ENCODE measurements at regions of chr14 and their contacts with region 1.

Region 1: DNA sequence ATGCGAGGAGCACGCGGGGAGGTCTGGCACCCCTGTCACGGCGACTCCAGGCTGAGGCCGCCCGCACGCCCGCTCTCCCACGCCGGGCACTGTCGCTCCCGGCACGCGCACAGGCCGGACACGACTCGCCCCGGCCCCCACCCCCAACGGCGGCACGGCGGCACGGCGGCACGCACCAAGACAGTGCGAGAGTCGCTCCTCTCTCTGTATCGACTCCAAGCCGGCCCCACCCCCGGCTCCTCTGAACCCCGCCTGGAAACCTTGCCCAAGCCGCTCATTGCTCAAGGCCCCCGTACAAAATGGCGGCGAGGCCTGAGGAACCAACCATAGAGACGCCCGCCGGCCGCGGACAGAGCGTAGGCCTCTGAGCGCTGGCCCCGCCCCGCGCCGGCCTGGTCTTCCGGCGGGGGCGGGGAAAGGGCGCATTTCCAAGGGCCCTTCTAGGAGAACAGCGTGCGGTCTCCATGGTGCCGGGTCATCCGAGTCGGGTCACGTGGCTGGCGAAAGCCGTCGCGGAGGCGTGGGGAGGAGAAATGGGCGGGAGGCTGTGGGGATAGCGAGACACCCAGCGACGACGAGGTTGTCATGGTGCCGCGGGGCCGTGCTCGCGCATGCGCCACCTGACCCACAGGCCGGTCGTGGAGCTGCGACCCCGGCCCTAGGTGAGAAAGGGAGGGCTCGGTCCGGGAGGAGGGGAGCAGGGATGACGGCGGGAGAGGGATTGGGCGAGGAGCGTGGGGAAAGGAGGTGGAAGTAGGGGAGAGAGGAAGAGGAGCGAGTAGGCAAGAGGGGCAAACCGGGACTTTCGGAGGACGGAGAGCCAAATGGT is at the start of gene CIPC:
- DNase-seq: peak; percentile 100
- ATAC-seq: peak; percentile 70 to 72
- H3K4me3 ChIP-seq: peak within 1 kb of the TSS; percentile 71 to 90 (median 85)
- H3K27ac ChIP-seq: peak within 1 kb of the TSS; percentile 93 to 99 (median 98)
- H3K4me1 ChIP-seq: peaks cover 54 to 58% of the 10 kb centered on the region in 2 donors
- H3K27me3 ChIP-seq: no peaks in the 10 kb centered on the region
- CTCF ChIP-seq: no peak
- POLR2A ChIP-seq: peak; percentile 89 to 94
- total RNA-seq, gene CIPC: 114 to 178 (median 120) TPM

Region 2: GRCh38 chr14:76812211-76813044 is 285.5 kb before region 1 on chr14 and contains the start of gene ANGEL1:
- in situ Hi-C with region 1: no loop called
- intact Hi-C with region 1: loop called (anchors 1 kb)
- DNase-seq: peak; percentile 92 to 97
- ATAC-seq: peak; percentile 91
- H3K4me3 ChIP-seq: peak within 1 kb of the TSS; percentile 71 to 91 (median 86)
- H3K27ac ChIP-seq: peak within 1 kb of the TSS; percentile 86 to 92 (median 90)
- H3K4me1 ChIP-seq: peaks cover 8 to 16% of the 10 kb centered on the region in 2 donors
- H3K27me3 ChIP-seq: no peaks in the 10 kb centered on the region
- CTCF ChIP-seq: peak in 2 of 5 experiments; percentile 16 to 38
- POLR2A ChIP-seq: peak; percentile 83 to 94
- total RNA-seq, gene ANGEL1: 8.6 to 16.9 (median 12.7) TPM

Region 3: DNA sequence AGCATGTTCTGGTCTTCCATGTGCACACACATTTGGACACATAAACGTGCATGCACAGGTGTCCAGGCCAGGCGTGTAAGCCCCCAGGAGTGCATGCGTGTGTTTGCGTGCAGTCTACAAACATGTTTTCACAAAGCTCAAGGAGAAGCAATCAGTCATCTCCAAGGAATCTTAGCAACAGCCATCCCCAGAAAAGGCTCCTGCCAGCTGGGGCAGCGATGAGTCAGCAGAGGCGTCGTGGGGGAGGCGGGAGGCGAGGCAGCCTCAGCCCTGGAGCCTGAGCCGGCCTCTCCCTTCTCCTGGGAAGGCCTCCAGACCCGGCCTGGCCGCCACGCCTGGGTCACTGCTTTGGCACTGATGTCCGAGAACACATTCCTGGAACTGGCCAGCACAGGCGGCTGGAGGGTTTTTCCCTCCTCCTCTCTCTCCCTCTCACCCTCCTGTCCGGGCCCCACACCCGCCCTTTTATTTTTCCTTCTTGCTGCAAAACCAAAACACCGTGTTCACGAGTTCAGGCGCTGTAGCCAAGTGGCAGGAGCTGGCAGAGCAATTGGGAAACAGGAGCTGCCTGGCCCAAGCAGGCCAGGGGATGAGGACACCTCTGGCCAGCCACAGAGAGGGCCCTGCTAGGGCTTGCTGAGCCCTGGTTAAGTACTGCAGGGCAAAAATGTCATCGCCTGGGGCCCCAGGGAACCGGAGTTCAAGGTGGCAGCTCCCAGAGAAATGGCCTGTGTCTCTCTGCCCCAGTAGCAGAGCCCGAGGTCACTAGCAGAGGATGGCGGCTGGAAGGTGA is 179.0 kb before region 1 on chr14:
- in situ Hi-C with region 1: no loop called
- intact Hi-C with region 1: loop called (anchors 1 kb)
- DNase-seq: peak; percentile 96 to 99
- ATAC-seq: peak; percentile 71 to 72
- H3K4me3 ChIP-seq: peak overlapping the region; percentile 7 to 49 (median 32)
- H3K27ac ChIP-seq: peak overlapping the region; percentile 90 to 98 (median 94)
- H3K4me1 ChIP-seq: peaks cover 49% of the 10 kb centered on the region in 2 donors
- H3K27me3 ChIP-seq: no peaks in the 10 kb centered on the region
- CTCF ChIP-seq: no peak
- POLR2A ChIP-seq: peak in 1 of 2 donors; percentile 40

Region 4: GRCh38 chr14:77040059-77040740 is 57.7 kb before region 1 on chr14:
- in situ Hi-C with region 1: no loop called
- intact Hi-C with region 1: loop called (anchors 5 kb)
- DNase-seq: peak; percentile 94 to 96
- ATAC-seq: peak; percentile 66
- H3K4me3 ChIP-seq: peak overlapping the region; percentile 52 to 65 (median 58)
- H3K27ac ChIP-seq: peak overlapping the region; percentile 84 to 100 (median 96)
- H3K4me1 ChIP-seq: peaks cover 75 to 90% of the 10 kb centered on the region in 2 donors
- H3K27me3 ChIP-seq: no peaks in the 10 kb centered on the region
- CTCF ChIP-seq: no peak
- POLR2A ChIP-seq: peak in 1 of 2 donors; percentile 44

Region 5: DNA sequence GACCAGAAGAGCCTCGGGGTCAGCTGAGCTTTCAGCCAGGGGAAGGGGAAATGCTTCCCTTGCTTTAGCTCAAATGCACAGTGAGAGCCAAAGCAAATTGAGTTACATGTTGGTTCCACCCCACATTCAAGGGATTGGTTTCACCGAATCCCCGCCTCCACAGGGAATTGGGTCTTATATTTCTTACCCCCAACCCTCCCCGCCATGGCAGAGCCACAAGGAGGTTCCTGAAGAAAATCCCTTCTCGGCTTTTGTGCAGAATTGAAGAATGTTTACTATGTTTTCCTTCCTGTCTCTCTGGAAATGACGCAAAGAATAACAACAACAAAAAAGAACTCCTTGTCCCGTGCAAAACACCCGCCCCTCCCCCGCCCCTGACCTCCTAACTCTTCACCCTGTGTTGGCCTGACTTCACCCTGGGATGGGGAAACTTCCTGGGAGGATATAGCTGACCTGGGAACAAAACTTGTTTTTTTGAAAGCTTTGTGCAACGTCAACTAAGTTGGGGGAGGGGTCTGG is 21.7 kb before region 1 on chr14:
- in situ Hi-C with region 1: no loop called
- intact Hi-C with region 1: loop called (anchors 2 kb)
- DNase-seq: peak; percentile 72 to 87
- ATAC-seq: peak; percentile 86 to 91
- H3K4me3 ChIP-seq: peak overlapping the region; percentile 47 to 54 (median 50)
- H3K27ac ChIP-seq: peak overlapping the region; percentile 80 to 94 (median 90)
- H3K4me1 ChIP-seq: peaks cover 13 to 31% of the 10 kb centered on the region in 2 donors
- H3K27me3 ChIP-seq: no peaks in the 10 kb centered on the region
- CTCF ChIP-seq: no peak
- POLR2A ChIP-seq: peak; percentile 57 to 73

Region 6: GRCh38 chr14:77181603-77182437 is 83.9 kb after region 1 on chr14 and contains the start of gene TMEM63C:
- in situ Hi-C with region 1: no loop called
- intact Hi-C with region 1: no loop called
- DNase-seq: no peak
- ATAC-seq: no peak
- H3K4me3 ChIP-seq: peak within 1 kb of the TSS in 2 of 4 donors; percentile 24 to 31
- H3K27ac ChIP-seq: no peak within 1 kb of the TSS
- H3K4me1 ChIP-seq: no peaks in the 10 kb centered on the region
- H3K27me3 ChIP-seq: peaks cover 29 to 33% (median 33%) of the 10 kb centered on the region in 3 donors
- CTCF ChIP-seq: no peak
- POLR2A ChIP-seq: no peak
- total RNA-seq, gene TMEM63C: 0.05 TPM in 2 of 4 donors, not detected in the others

Region 7: GRCh38 chr14:77314043-77314442 is 216.1 kb after region 1 on chr14:
- in situ Hi-C with region 1: loop called in 3 of 4 experiments (anchors 10 kb)
- intact Hi-C with region 1: no loop called
- DNase-seq: peak; percentile 49 to 51
- ATAC-seq: peak; percentile 47 to 76
- H3K4me3 ChIP-seq: no peak overlapping the region
- H3K27ac ChIP-seq: peak overlapping the region; percentile 84 to 96 (median 89)
- H3K4me1 ChIP-seq: peaks cover 73 to 88% of the 10 kb centered on the region in 2 donors
- H3K27me3 ChIP-seq: no peaks in the 10 kb centered on the region
- CTCF ChIP-seq: no peak
- POLR2A ChIP-seq: peak in 1 of 2 donors; percentile 67